ENCODE measurements at regions of chr5 and their contacts with region 1.

Region 1: GRCh38 chr5:15995341-15996052 is 184.1 kb downstream of the MARCHF11 start:
- DNase-seq: peak; percentile 56
- H3K4me3 Mint-ChIP-seq: no peak overlapping the region
- H3K27ac Mint-ChIP-seq: no peak overlapping the region
- H3K4me1 Mint-ChIP-seq: peaks cover 11% of the 10 kb centered on the region
- H3K27me3 Mint-ChIP-seq: peaks cover 15% of the 10 kb centered on the region
- CTCF ChIP-seq: peak; percentile 52

Region 2: GRCh38 chr5:15003511-15003920 is 992.0 kb before region 1 on chr5:
- CTCF ChIA-PET with region 1: no interaction called
- POLR2A ChIA-PET with region 1: no interaction called
- intact Hi-C with region 1: loop called (anchors 5 kb)
- DNase-seq: peak; percentile 77
- H3K4me3 Mint-ChIP-seq: no peak overlapping the region
- H3K27ac Mint-ChIP-seq: no peak overlapping the region
- H3K4me1 Mint-ChIP-seq: peaks cover 12% of the 10 kb centered on the region
- H3K27me3 Mint-ChIP-seq: peaks cover 19% of the 10 kb centered on the region
- CTCF ChIP-seq: peak; percentile 81

Region 3: GRCh38 chr5:15191012-15191411 is 804.5 kb before region 1 on chr5:
- CTCF ChIA-PET with region 1: no interaction called
- POLR2A ChIA-PET with region 1: no interaction called
- intact Hi-C with region 1: loop called (anchors 2 kb)
- DNase-seq: peak; percentile 6
- H3K4me3 Mint-ChIP-seq: no peak overlapping the region
- H3K27ac Mint-ChIP-seq: no peak overlapping the region
- H3K4me1 Mint-ChIP-seq: no peaks in the 10 kb centered on the region
- H3K27me3 Mint-ChIP-seq: peaks cover 11% of the 10 kb centered on the region
- CTCF ChIP-seq: peak; percentile 18

Region 4: DNA sequence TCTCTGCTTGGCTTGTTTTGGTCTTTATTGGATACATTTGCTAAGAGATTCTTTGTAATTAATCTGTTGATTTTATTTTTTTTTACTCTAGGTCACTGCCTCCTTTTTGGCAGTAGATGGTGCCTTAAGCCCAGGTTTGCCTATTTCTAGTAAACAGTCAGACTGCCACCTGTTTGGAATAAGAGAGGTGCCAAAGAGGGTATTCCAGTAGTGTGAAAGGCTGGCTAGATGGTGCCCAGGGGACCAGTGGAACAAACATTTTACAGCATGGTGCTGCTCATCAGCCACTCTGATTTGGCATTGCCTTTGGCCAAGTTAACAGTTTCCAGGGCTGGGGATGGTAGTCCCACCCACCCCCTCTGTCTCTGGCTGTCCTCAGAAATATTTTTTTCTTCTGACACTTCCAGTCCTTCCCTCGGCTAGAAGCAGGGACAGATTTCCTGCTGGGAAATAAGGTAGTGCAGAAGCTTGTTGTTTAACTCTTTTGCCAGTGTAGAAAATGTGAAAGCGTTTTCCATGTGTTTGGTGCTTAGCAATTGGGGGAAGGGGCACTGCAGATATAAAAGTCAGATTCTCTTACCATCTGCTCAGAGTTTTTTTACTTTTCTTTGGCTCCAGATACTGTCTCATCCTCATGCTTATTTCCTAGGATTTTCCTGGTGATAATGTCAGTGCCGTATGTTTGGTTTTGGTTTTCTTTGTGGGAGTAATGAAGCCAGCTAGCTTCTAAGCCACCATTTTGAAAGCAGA is 532.1 kb before region 1 on chr5:
- CTCF ChIA-PET with region 1: interaction called, 4 read pairs
- POLR2A ChIA-PET with region 1: no interaction called
- intact Hi-C with region 1: loop called (anchors 1 kb)
- DNase-seq: no peak
- H3K4me3 Mint-ChIP-seq: no peak overlapping the region
- H3K27ac Mint-ChIP-seq: no peak overlapping the region
- H3K4me1 Mint-ChIP-seq: no peaks in the 10 kb centered on the region
- H3K27me3 Mint-ChIP-seq: peaks cover 10% of the 10 kb centered on the region
- CTCF ChIP-seq: peak; percentile 37

Region 5: DNA sequence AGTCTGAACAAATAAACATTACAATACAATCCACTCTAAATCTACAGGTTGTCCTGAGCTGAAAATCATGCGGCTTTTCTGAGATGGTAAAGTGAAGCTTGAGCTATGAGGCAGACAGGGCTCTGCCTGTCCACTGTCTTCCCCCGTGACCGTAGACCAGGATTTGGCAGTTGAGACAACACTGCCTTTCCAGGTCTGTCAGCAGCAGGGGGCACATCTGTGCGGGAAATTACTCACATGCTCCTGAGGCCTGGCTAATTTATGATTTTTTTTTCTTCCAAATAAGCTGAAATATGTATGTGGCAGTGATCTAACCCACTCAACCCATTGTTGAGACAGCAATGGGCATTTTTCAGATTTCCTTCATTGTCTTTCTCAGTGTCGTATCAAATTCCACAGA is 187.6 kb before region 1 on chr5:
- CTCF ChIA-PET with region 1: no interaction called
- POLR2A ChIA-PET with region 1: no interaction called
- intact Hi-C with region 1: loop called (anchors 1 kb)
- DNase-seq: peak; percentile 10
- H3K4me3 Mint-ChIP-seq: no peak overlapping the region
- H3K27ac Mint-ChIP-seq: no peak overlapping the region
- H3K4me1 Mint-ChIP-seq: no peaks in the 10 kb centered on the region
- H3K27me3 Mint-ChIP-seq: no peaks in the 10 kb centered on the region
- CTCF ChIP-seq: no peak

Region 6: DNA sequence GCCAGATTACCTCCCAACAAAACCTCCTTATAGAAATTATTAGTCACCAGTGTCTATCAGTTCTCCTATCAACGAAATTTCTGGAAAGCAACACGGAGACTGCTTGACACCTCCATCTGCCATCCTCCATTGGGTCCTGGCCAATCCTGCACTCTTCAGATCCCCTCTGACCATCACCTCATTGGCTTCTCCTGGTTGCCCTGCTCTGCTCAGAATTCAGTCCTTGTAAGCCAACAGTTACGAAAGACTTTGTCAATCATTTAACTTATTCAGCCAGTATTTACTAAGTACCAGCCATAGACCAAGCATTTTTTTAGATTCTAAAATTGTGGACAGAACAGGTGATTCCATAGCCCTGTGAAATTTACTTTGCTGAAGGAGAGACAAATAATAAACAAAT is 44.4 kb before region 1 on chr5:
- CTCF ChIA-PET with region 1: no interaction called
- POLR2A ChIA-PET with region 1: no interaction called
- intact Hi-C with region 1: no loop called
- DNase-seq: no peak
- H3K4me3 Mint-ChIP-seq: no peak overlapping the region
- H3K27ac Mint-ChIP-seq: no peak overlapping the region
- H3K4me1 Mint-ChIP-seq: no peaks in the 10 kb centered on the region
- H3K27me3 Mint-ChIP-seq: no peaks in the 10 kb centered on the region
- CTCF ChIP-seq: no peak